Heart right ventricle (tissue), 16 donors: ENCODE measurements at regions of chr1 and their contacts with region 1.

Region 1: GRCh38 chr1:14778898-14779865 is 180.7 kb downstream of the KAZN start:
- DNase-seq: peak; percentile 6 to 25
- ATAC-seq: no peak
- H3K4me3 ChIP-seq: no peak overlapping the region
- H3K27ac ChIP-seq: no peak overlapping the region
- H3K4me1 ChIP-seq: peaks cover 0 to 3% (median 0%) of the 10 kb centered on the region in 9 donors
- H3K27me3 ChIP-seq: peaks cover 0 to 4% (median 0%) of the 10 kb centered on the region in 7 donors
- CTCF ChIP-seq: peak; percentile 48 to 76 (median 62)

Region 2: GRCh38 chr1:14742181-14742980 is 36.8 kb before region 1 on chr1:
- intact Hi-C with region 1: no loop called
- DNase-seq: no peak
- ATAC-seq: peak in 1 of 8 donors; percentile 80
- H3K4me3 ChIP-seq: no peak overlapping the region
- H3K27ac ChIP-seq: peak overlapping the region in 1 of 10 donors; percentile 40
- H3K4me1 ChIP-seq: peaks cover 0 to 10% (median 0%) of the 10 kb centered on the region in 9 donors
- H3K27me3 ChIP-seq: peaks cover 0 to 62% (median 51%) of the 10 kb centered on the region in 7 donors
- CTCF ChIP-seq: no peak

Region 3: DNA sequence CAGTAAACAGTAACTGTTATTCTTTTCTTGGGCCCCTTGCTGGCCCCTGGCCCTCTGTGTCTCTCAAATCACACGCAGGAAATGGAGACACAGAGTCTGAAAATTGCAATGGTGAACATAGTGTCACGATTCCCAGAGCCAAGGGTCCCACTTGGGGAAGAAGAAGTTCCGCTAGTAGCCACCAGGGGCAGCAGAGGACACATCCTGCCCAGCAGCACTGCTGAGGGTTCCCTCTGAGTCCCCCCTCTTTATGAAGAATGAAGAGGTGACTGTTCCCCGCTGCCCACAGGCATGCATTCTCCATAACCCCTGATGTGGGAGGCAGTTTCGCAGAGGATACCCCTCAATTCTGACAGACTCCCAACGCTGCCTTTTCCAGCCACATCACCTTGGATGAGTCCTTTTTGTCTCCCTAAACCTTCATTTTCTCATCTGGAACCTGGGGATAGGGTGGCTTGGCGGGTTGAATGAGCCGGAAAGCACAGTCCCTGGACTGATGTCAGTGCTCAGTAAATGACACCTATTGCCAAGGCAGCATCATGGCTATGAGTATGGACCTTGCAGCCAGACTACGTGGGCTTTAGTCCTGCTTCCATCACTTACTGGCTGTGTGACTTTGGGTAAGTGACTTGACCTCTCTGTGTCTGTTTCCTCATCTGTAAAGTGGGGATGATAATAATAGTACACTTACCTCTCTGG is 136.3 kb after region 1 on chr1:
- intact Hi-C with region 1: loop called in 1 of 10 experiments (anchors 10 kb)
- DNase-seq: peak; percentile 41 to 42
- ATAC-seq: peak in 6 of 8 donors; percentile 52 to 73 (median 57)
- H3K4me3 ChIP-seq: no peak overlapping the region
- H3K27ac ChIP-seq: no peak overlapping the region
- H3K4me1 ChIP-seq: no peaks in the 10 kb centered on the region
- H3K27me3 ChIP-seq: no peaks in the 10 kb centered on the region
- CTCF ChIP-seq: peak; percentile 83 to 96 (median 90)